ENCODE measurements at regions of chr21 and their contacts with region 1.

Region 1: GRCh38 chr21:31310750-31311149 is 33.3 kb downstream of the TIAM1 start:
- DNase-seq: peak; percentile 70
- H3K4me3 ChIP-seq: no peak overlapping the region
- H3K27ac ChIP-seq: peak overlapping the region; percentile 20
- H3K4me1 ChIP-seq: peaks cover 11% of the 10 kb centered on the region
- H3K27me3 ChIP-seq: no peaks in the 10 kb centered on the region
- CTCF ChIP-seq: no peak

Region 2: DNA sequence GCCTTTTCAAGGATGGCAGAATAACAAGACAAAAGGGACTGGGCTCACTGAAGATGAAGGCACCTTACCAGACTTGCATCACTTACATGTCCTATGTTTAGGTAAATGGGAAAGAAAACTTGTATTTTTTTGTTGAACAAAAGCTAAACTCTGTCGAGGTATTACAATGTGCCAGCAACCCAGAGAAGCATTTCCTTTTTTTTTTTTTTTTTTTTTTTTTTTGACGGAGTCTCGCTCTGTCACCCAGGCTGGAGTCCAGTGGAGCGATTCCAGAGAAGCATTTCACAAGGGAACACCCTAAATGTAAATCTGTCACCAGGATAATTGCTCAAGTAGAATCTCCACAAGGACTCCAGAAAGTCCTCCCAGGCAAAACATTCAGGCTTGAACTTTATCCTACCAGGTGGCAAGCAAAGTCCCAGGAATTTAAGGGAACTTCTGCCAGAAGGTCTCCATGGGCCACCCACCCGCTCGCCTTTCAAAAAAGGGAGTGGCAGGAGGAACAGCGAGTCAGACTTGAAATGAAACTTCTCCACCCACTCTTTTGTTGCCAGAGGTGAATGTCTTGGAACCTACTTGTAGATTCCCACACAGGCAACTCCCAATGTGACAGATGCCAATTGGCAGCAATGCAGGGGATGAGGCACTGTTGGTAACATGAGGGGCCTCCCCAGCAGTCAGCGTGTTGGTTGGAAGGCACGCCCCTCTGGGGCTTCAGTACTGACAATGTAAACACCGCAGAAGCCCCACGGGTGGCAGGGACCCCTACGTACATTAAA is 91.7 kb before region 1 on chr21:
- CTCF ChIA-PET with region 1: no interaction called
- dilution Hi-C with region 1: loop called (anchors 5 kb)
- in situ Hi-C with region 1: no loop called
- intact Hi-C with region 1: no loop called
- DNase-seq: peak; percentile 92
- H3K4me3 ChIP-seq: no peak overlapping the region
- H3K27ac ChIP-seq: peak overlapping the region; percentile 64
- H3K4me1 ChIP-seq: peaks cover 34% of the 10 kb centered on the region
- H3K27me3 ChIP-seq: no peaks in the 10 kb centered on the region
- CTCF ChIP-seq: no peak